Activated CD4-positive, alpha-beta T cell treated with anti-CD3 and anti-CD28 coated beads for 36 hours (primary cell): ENCODE measurements at regions of chr3 and their contacts with region 1.

Region 1: DNA sequence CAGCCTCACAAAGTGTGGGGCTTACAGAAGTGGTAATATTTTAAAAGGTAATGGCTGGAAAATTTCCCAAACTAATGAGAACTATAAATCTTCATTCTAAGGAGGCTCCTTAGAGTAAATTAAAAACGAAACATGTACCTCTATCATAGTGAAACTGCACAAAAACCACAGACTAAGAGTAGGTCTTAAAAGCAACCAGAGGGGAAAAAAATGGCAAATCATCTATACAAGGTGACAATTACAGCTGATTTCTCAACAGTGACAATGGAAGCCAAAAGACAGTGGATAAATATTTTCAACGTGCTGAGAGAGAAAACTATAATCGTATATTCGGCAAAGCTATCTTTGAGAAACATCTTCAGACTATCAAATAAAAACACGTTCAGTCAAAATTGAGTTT is 20.6 kb downstream of the HEG1 start:
- DNase-seq: no peak
- ATAC-seq: peak; percentile 92
- H3K4me3 Mint-ChIP-seq: no peak overlapping the region
- H3K27ac Mint-ChIP-seq: peak overlapping the region; percentile 10
- H3K4me1 Mint-ChIP-seq: peaks cover 22% of the 10 kb centered on the region
- H3K27me3 Mint-ChIP-seq: no peaks in the 10 kb centered on the region

Region 2: DNA sequence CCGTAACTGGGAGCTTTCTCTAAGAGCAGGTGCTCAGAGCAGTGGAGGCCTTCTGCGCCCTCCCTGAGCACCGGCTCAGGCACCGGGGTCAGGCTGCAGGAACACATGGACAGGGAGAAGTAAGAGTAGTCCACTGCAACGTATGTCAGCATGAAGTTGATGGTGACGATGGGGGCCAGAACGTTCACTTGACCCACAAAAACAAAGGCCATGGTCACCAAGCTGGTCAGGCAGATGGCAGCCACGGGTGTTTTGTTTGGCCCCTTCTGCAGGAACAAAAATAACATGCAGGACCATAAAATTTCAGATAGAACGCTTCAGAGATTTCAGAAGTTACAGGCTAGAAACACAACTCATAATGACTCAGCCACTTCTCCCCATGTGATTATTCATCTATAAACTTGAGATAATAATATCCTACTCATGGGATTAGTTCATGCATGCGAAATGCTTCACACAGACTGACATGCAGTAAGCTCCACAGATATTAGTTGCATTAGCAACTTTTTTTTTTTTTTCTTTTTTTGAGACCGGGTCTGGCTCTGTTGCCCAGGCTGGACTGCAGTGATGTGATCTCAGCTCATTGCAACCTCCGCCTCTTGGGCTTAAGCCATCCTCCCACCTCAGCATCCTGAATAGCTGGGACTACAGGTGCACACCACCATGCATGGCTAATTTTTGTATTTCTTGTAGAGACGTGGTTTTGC is 72.8 kb after region 1 on chr3:
- CTCF ChIA-PET with region 1: no interaction called
- POLR2A ChIA-PET with region 1: no interaction called
- intact Hi-C with region 1: loop called in 1 of 2 experiments (anchors 2 kb)
- DNase-seq: no peak
- ATAC-seq: peak; percentile 59
- H3K4me3 Mint-ChIP-seq: no peak overlapping the region
- H3K27ac Mint-ChIP-seq: no peak overlapping the region
- H3K4me1 Mint-ChIP-seq: peaks cover 33% of the 10 kb centered on the region
- H3K27me3 Mint-ChIP-seq: peaks cover 22% of the 10 kb centered on the region

Region 3: GRCh38 chr3:125156456-125156855 is 121.2 kb after region 1 on chr3:
- CTCF ChIA-PET with region 1: no interaction called
- POLR2A ChIA-PET with region 1: no interaction called
- intact Hi-C with region 1: no loop called
- DNase-seq: no peak
- ATAC-seq: no peak
- H3K4me3 Mint-ChIP-seq: no peak overlapping the region
- H3K27ac Mint-ChIP-seq: no peak overlapping the region
- H3K4me1 Mint-ChIP-seq: peaks cover 8% of the 10 kb centered on the region
- H3K27me3 Mint-ChIP-seq: peaks cover 10% of the 10 kb centered on the region